CD14-positive monocyte (primary cell): ENCODE measurements at regions of chr14 and their contacts with region 1.

Region 1: GRCh38 chr14:102437997-102438915 is 71.3 kb downstream of the ANKRD9 start:
- DNase-seq: peak; percentile 64 to 72 (median 66)
- H3K4me3 ChIP-seq: no peak overlapping the region
- H3K4me3 Mint-ChIP-seq: peak overlapping the region in 1 of 2 donors; percentile 53
- H3K27ac ChIP-seq: no peak overlapping the region
- H3K27ac Mint-ChIP-seq: no peak overlapping the region
- H3K4me1 ChIP-seq: peaks cover 0 to 6% of the 10 kb centered on the region in 2 donors
- H3K4me1 Mint-ChIP-seq: peaks cover 5% of the 10 kb centered on the region
- H3K27me3 ChIP-seq: no peaks in the 10 kb centered on the region
- H3K27me3 Mint-ChIP-seq: no peaks in the 10 kb centered on the region
- CTCF ChIP-seq: peak; percentile 82

Region 2: GRCh38 chr14:102370305-102370809 is 67.9 kb before region 1 on chr14:
- intact Hi-C with region 1: no loop called
- DNase-seq: peak; percentile 81 to 94 (median 87)
- H3K4me3 ChIP-seq: peak overlapping the region in 1 of 3 experiments; percentile 39
- H3K4me3 Mint-ChIP-seq: peak overlapping the region; percentile 56 to 82
- H3K27ac ChIP-seq: peak overlapping the region; percentile 85 to 91
- H3K27ac Mint-ChIP-seq: peak overlapping the region; percentile 94 to 99 (median 98)
- H3K4me1 ChIP-seq: peaks cover 25 to 30% of the 10 kb centered on the region in 2 donors
- H3K4me1 Mint-ChIP-seq: peaks cover 36% of the 10 kb centered on the region
- H3K27me3 ChIP-seq: no peaks in the 10 kb centered on the region
- H3K27me3 Mint-ChIP-seq: no peaks in the 10 kb centered on the region
- CTCF ChIP-seq: no peak

Region 3: DNA sequence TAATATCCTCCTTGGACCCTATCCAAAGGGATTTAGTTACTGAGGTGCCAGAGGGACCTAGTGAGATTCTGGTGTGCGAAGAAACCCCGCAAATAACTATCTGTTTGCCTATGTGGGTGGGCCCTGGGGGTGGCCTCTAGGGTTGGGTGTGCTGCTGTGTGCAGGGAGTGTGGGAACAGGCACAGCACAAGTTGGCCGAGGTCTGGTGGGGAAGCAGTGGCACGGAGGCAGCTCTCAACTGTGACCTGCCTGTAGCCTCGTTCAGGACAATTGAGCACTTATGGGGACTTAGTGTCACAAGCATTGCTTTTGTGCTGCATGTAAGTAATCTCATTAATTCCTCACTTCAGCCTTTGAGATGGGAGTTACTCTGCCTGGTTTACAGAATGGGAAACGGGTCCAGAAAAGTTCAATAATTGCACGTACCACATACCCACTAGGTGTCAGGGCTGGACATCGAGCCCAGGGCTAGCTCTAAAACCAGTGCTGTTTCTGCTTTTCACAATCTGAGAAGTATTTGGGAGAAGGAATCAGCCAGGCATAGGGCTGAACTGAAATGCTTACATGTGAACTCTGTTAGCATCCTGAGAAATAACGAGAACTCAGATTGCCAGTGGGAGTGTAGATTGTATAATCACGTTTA is 16.7 kb before region 1 on chr14:
- intact Hi-C with region 1: no loop called
- DNase-seq: no peak
- H3K4me3 ChIP-seq: no peak overlapping the region
- H3K4me3 Mint-ChIP-seq: no peak overlapping the region
- H3K27ac ChIP-seq: no peak overlapping the region
- H3K27ac Mint-ChIP-seq: peak overlapping the region in 1 of 7 donors; percentile 16
- H3K4me1 ChIP-seq: no peaks in the 10 kb centered on the region
- H3K4me1 Mint-ChIP-seq: no peaks in the 10 kb centered on the region
- H3K27me3 ChIP-seq: no peaks in the 10 kb centered on the region
- H3K27me3 Mint-ChIP-seq: peaks cover 0 to 1% (median 0%) of the 10 kb centered on the region in 3 donors
- CTCF ChIP-seq: no peak

Region 4: GRCh38 chr14:102516531-102517415 is 78.5 kb after region 1 on chr14:
- intact Hi-C with region 1: loop called (anchors 1 to 2 kb)
- DNase-seq: peak; percentile 49 to 81 (median 57)
- H3K4me3 ChIP-seq: peak overlapping the region; percentile 23 to 77 (median 53)
- H3K4me3 Mint-ChIP-seq: peak overlapping the region; percentile 80 to 92
- H3K27ac ChIP-seq: peak overlapping the region in 1 of 2 donors; percentile 71
- H3K27ac Mint-ChIP-seq: peak overlapping the region in 3 of 7 donors; percentile 43 to 76 (median 69)
- H3K4me1 ChIP-seq: peaks cover 9 to 15% of the 10 kb centered on the region in 2 donors
- H3K4me1 Mint-ChIP-seq: peaks cover 5% of the 10 kb centered on the region
- H3K27me3 ChIP-seq: peaks cover 0 to 7% of the 10 kb centered on the region in 2 donors
- H3K27me3 Mint-ChIP-seq: peaks cover 6 to 30% (median 15%) of the 10 kb centered on the region in 3 donors
- CTCF ChIP-seq: peak; percentile 100

Region 5: GRCh38 chr14:102545461-102546265 is 107.4 kb after region 1 on chr14:
- intact Hi-C with region 1: no loop called
- DNase-seq: no peak
- H3K4me3 ChIP-seq: no peak overlapping the region
- H3K4me3 Mint-ChIP-seq: peak overlapping the region; percentile 49 to 80
- H3K27ac ChIP-seq: no peak overlapping the region
- H3K27ac Mint-ChIP-seq: no peak overlapping the region
- H3K4me1 ChIP-seq: peaks cover 15 to 24% of the 10 kb centered on the region in 2 donors
- H3K4me1 Mint-ChIP-seq: peaks cover 20% of the 10 kb centered on the region
- H3K27me3 ChIP-seq: peaks cover 16 to 42% of the 10 kb centered on the region in 2 donors
- H3K27me3 Mint-ChIP-seq: peaks cover 51 to 74% (median 56%) of the 10 kb centered on the region in 3 donors
- CTCF ChIP-seq: no peak

Region 6: DNA sequence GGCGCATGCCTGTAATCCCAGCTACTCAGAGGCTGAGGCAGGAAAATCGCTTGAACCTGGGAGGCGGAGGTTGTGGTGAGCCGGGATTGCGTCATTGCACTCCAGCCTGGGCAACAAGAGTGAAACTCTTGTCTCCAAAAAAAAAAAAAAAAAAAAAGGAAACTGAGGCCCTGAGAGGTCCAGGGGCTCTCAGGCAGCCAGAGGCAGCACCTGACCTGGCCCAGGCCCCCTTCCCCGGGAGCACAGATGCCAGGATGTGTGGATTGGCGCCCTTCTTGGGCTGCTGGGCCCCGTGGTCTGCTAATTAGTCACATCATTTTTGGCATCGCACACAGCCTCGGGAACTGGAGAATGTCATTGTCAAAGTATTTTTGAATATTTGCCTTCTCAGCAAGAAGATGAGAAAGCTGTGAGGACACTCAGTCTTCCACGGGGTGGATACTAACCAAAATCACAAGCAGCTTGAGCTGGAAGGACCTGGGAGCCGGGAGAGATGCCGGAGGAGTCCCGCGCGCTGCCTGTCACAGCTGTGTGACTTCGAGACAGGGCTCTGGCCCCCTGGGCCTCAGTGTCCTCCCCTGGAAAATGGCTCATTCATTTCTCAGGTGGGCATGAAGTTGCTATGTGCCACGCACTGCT is 141.6 kb after region 1 on chr14:
- intact Hi-C with region 1: loop called in 1 of 2 experiments (anchors 10 kb)
- DNase-seq: peak in 2 of 3 donors; percentile 13 to 30
- H3K4me3 ChIP-seq: peak overlapping the region in 1 of 3 experiments; percentile 25
- H3K4me3 Mint-ChIP-seq: peak overlapping the region in 1 of 2 donors; percentile 37
- H3K27ac ChIP-seq: no peak overlapping the region
- H3K27ac Mint-ChIP-seq: peak overlapping the region in 1 of 7 donors; percentile 59
- H3K4me1 ChIP-seq: peaks cover 20 to 26% of the 10 kb centered on the region in 2 donors
- H3K4me1 Mint-ChIP-seq: peaks cover 23% of the 10 kb centered on the region
- H3K27me3 ChIP-seq: no peaks in the 10 kb centered on the region
- H3K27me3 Mint-ChIP-seq: peaks cover 3 to 6% (median 5%) of the 10 kb centered on the region in 3 donors
- CTCF ChIP-seq: no peak

Region 7: GRCh38 chr14:102633906-102634595 is 195.8 kb after region 1 on chr14:
- intact Hi-C with region 1: no loop called
- DNase-seq: no peak
- H3K4me3 ChIP-seq: no peak overlapping the region
- H3K4me3 Mint-ChIP-seq: no peak overlapping the region
- H3K27ac ChIP-seq: peak overlapping the region in 1 of 2 donors; percentile 13
- H3K27ac Mint-ChIP-seq: peak overlapping the region in 3 of 7 donors; percentile 2 to 77 (median 27)
- H3K4me1 ChIP-seq: peaks cover 10 to 13% of the 10 kb centered on the region in 2 donors
- H3K4me1 Mint-ChIP-seq: peaks cover 14% of the 10 kb centered on the region
- H3K27me3 ChIP-seq: no peaks in the 10 kb centered on the region
- H3K27me3 Mint-ChIP-seq: peaks cover 0 to 2% (median 1%) of the 10 kb centered on the region in 3 donors
- CTCF ChIP-seq: no peak